Ovary (tissue), 10 donors: ENCODE measurements at regions of chr4 and their contacts with region 1.

Region 1: DNA sequence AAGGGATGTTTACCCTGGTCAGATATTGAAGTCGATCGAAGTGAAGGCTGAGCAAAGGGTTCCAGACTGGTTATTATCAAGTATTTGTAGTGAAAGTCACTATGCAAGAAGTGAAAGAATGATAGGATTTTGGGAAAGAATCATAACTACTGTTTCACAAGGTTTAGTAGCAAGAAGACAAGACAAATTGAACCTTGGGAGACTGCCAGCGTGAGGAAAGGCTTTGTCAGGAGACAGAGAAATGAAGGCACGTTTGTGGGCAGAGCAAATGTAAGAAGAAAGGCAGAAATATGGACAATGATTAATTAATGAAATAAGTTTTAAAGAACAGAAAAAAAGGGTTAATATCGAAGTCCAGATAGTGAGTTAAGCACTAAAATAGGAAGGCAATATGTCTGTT is 456.8 kb downstream of the TRIML1 start:
- DNase-seq: no peak
- H3K4me3 ChIP-seq: no peak overlapping the region
- H3K27ac ChIP-seq: no peak overlapping the region
- H3K4me1 ChIP-seq: no peaks in the 10 kb centered on the region
- H3K27me3 ChIP-seq: no peaks in the 10 kb centered on the region
- CTCF ChIP-seq: no peak
- EP300 ChIP-seq: no peak
- POLR2A ChIP-seq: no peak

Region 2: DNA sequence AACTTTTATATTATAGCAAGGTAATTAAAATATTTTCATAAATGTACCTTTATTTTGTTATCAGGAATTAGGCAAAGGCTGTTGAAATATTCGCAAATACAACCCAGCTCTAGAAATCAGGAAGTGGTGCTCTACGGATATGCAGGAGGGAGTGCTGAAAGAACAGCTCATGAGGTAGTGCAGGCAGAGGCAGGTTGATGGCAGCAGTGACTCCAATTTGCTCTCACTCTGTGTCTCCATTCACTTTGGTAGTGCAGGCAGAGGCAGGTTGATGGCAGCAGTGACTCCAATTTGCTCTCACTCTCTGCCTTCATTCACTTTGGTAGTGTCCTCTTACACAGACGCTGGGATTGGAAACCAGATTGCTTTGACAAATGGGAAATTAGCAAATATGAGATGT is 178.8 kb before region 1 on chr4:
- intact Hi-C with region 1: loop called in 1 of 4 experiments (anchors 5 kb)
- DNase-seq: no peak
- H3K4me3 ChIP-seq: no peak overlapping the region
- H3K27ac ChIP-seq: no peak overlapping the region
- H3K4me1 ChIP-seq: no peaks in the 10 kb centered on the region
- H3K27me3 ChIP-seq: no peaks in the 10 kb centered on the region
- CTCF ChIP-seq: no peak
- EP300 ChIP-seq: no peak
- POLR2A ChIP-seq: no peak